ENCODE measurements at regions of chr18 and their contacts with region 1.

Region 1: GRCh38 chr18:59837586-59837985 is 62.2 kb upstream of the PMAIP1 start:
- DNase-seq: peak in 8 of 9 donors; percentile 10 to 43 (median 26)
- ATAC-seq: peak; percentile 75
- H3K4me3 ChIP-seq: no peak overlapping the region
- H3K4me3 Mint-ChIP-seq: no peak overlapping the region
- H3K27ac ChIP-seq: no peak overlapping the region
- H3K27ac Mint-ChIP-seq: no peak overlapping the region
- H3K4me1 ChIP-seq: no peaks in the 10 kb centered on the region
- H3K4me1 Mint-ChIP-seq: peaks cover 0 to 7% (median 0%) of the 10 kb centered on the region in 7 donors
- H3K27me3 ChIP-seq: no peaks in the 10 kb centered on the region
- H3K27me3 Mint-ChIP-seq: peaks cover 0 to 25% (median 0%) of the 10 kb centered on the region in 5 donors

Region 2: GRCh38 chr18:59769129-59769865 is 68.3 kb before region 1 on chr18:
- CTCF ChIA-PET with region 1: no interaction called
- POLR2A ChIA-PET with region 1: no interaction called
- intact Hi-C with region 1: no loop called
- DNase-seq: no peak
- ATAC-seq: no peak
- H3K4me3 ChIP-seq: no peak overlapping the region
- H3K4me3 Mint-ChIP-seq: no peak overlapping the region
- H3K27ac ChIP-seq: no peak overlapping the region
- H3K27ac Mint-ChIP-seq: no peak overlapping the region
- H3K4me1 ChIP-seq: no peaks in the 10 kb centered on the region
- H3K4me1 Mint-ChIP-seq: no peaks in the 10 kb centered on the region
- H3K27me3 ChIP-seq: no peaks in the 10 kb centered on the region
- H3K27me3 Mint-ChIP-seq: peaks cover 0 to 30% (median 24%) of the 10 kb centered on the region in 5 donors

Region 3: GRCh38 chr18:59885579-59886163 is 48.1 kb after region 1 on chr18:
- CTCF ChIA-PET with region 1: interaction called, 3 read pairs
- POLR2A ChIA-PET with region 1: no interaction called
- intact Hi-C with region 1: loop called in 1 of 2 experiments (anchors 2 kb)
- DNase-seq: peak in 1 of 9 donors; percentile 32
- ATAC-seq: peak; percentile 62
- H3K4me3 ChIP-seq: no peak overlapping the region
- H3K4me3 Mint-ChIP-seq: peak overlapping the region in 5 of 10 donors; percentile 6 to 66 (median 8)
- H3K27ac ChIP-seq: no peak overlapping the region
- H3K27ac Mint-ChIP-seq: peak overlapping the region in 5 of 9 donors; percentile 4 to 76 (median 32)
- H3K4me1 ChIP-seq: peaks cover 8 to 9% of the 10 kb centered on the region in 2 donors
- H3K4me1 Mint-ChIP-seq: peaks cover 10 to 50% (median 27%) of the 10 kb centered on the region in 7 donors
- H3K27me3 ChIP-seq: no peaks in the 10 kb centered on the region
- H3K27me3 Mint-ChIP-seq: no peaks in the 10 kb centered on the region

Region 4: DNA sequence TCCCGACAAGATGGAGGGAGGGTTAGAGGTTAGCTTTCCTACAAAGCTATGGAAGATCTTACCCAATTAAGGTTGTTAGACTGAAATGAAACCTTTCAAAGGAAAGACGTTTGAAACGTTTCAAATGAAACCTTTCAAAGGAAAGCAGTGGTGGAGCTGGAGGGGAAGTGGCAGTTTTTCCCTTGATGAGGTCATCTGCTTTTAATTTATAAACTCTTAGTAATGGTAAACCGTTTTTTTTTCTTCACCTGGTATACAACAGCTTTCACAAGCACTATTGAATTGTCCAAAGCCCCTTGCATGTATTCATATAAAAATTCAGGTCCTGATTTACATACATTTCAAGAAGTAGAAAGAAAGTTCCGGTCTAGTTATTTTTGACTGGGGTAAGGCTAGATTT is 69.6 kb after region 1 on chr18:
- CTCF ChIA-PET with region 1: interaction called, 3 read pairs
- POLR2A ChIA-PET with region 1: no interaction called
- intact Hi-C with region 1: loop called in 1 of 2 experiments (anchors 1 kb)
- DNase-seq: no peak
- ATAC-seq: no peak
- H3K4me3 ChIP-seq: no peak overlapping the region
- H3K4me3 Mint-ChIP-seq: peak overlapping the region in 2 of 10 donors; percentile 4 to 66
- H3K27ac ChIP-seq: no peak overlapping the region
- H3K27ac Mint-ChIP-seq: peak overlapping the region in 5 of 9 donors; percentile 23 to 74 (median 60)
- H3K4me1 ChIP-seq: peaks cover 15% of the 10 kb centered on the region in 2 donors
- H3K4me1 Mint-ChIP-seq: peaks cover 28 to 57% (median 47%) of the 10 kb centered on the region in 7 donors
- H3K27me3 ChIP-seq: no peaks in the 10 kb centered on the region
- H3K27me3 Mint-ChIP-seq: no peaks in the 10 kb centered on the region

Region 5: GRCh38 chr18:59988098-59988706 is 150.6 kb after region 1 on chr18:
- CTCF ChIA-PET with region 1: no interaction called
- POLR2A ChIA-PET with region 1: no interaction called
- intact Hi-C with region 1: loop called (anchors 1 to 2 kb)
- DNase-seq: peak in 5 of 9 donors; percentile 19 to 37 (median 24)
- ATAC-seq: peak; percentile 54
- H3K4me3 ChIP-seq: no peak overlapping the region
- H3K4me3 Mint-ChIP-seq: no peak overlapping the region
- H3K27ac ChIP-seq: no peak overlapping the region
- H3K27ac Mint-ChIP-seq: no peak overlapping the region
- H3K4me1 ChIP-seq: no peaks in the 10 kb centered on the region
- H3K4me1 Mint-ChIP-seq: peaks cover 0 to 2% (median 0%) of the 10 kb centered on the region in 7 donors
- H3K27me3 ChIP-seq: no peaks in the 10 kb centered on the region
- H3K27me3 Mint-ChIP-seq: peaks cover 24 to 28% (median 27%) of the 10 kb centered on the region in 5 donors

Region 6: DNA sequence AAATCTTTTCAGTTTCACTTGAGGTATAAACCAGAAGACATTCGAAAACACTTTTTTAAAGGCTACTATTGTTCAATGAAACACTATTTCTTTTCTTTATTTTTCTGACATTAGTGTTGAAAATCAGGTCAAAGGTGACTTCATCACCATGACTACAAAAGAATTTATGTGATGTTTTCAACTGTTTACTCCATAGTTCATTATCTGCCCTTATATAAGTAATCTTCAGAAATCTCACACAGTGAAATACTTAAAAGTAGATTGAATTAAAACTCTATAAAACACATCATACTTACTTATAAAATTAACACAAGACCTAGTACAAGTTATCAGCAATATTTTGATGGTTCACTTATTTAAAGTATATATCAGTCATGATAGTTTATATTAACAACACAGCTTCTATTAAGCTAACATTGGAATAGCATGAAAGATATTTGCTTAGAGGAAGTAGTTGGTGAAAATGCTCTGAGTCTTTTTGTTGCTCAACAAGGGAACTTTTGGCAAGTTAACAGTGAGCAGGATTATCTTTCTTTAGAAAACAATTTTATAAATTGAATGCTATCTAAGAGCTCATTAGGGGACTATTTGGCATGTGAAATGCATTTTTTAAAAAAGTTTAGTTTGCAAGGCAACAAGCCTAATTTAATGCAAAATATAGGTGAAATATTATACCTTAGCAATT is 474.2 kb after region 1 on chr18:
- CTCF ChIA-PET with region 1: no interaction called
- POLR2A ChIA-PET with region 1: no interaction called
- intact Hi-C with region 1: no loop called
- DNase-seq: no peak
- ATAC-seq: no peak
- H3K4me3 ChIP-seq: no peak overlapping the region
- H3K4me3 Mint-ChIP-seq: no peak overlapping the region
- H3K27ac ChIP-seq: no peak overlapping the region
- H3K27ac Mint-ChIP-seq: no peak overlapping the region
- H3K4me1 ChIP-seq: no peaks in the 10 kb centered on the region
- H3K4me1 Mint-ChIP-seq: no peaks in the 10 kb centered on the region
- H3K27me3 ChIP-seq: no peaks in the 10 kb centered on the region
- H3K27me3 Mint-ChIP-seq: no peaks in the 10 kb centered on the region

Measured in naive thymus-derived CD4-positive, alpha-beta T cell (primary cell).